HEK293 (cell line): ENCODE measurements at regions of chr6 and their contacts with region 1.

Region 1: DNA sequence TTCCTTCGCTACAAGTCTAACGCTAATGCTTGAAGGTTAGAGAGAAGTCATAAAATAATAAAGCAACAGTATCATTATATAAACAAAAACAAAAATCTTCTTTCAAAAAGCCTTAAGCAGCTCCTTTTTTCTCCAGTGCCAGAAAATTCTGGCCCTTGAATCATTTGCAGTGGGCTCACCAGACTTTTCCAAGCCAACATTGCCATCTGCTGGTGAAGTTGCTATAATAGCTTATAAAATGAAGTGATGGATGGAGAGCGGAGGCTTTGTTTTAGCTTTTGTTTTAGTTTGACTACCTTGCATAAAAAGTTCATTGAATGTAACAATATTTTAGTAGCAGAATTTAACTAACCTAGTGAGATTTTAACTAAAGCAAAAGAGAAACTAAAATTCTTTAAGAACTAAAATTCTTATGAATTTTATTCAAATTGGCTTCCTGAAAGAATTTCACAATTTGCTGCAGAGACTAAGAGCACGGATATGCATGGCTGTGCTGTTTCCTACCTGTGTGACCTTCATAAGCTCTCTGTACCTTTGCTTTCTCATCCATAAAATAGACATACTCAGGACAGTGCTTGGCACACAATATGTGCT is 44.8 kb upstream of the SLC2A12 start:
- H3K4me3 ChIP-seq: no peak overlapping the region
- H3K27ac ChIP-seq: no peak overlapping the region
- H3K4me1 ChIP-seq: no peaks in the 10 kb centered on the region
- CTCF ChIP-seq: peak; percentile 32; the same call in 1 of the 2 replicates

Region 2: DNA sequence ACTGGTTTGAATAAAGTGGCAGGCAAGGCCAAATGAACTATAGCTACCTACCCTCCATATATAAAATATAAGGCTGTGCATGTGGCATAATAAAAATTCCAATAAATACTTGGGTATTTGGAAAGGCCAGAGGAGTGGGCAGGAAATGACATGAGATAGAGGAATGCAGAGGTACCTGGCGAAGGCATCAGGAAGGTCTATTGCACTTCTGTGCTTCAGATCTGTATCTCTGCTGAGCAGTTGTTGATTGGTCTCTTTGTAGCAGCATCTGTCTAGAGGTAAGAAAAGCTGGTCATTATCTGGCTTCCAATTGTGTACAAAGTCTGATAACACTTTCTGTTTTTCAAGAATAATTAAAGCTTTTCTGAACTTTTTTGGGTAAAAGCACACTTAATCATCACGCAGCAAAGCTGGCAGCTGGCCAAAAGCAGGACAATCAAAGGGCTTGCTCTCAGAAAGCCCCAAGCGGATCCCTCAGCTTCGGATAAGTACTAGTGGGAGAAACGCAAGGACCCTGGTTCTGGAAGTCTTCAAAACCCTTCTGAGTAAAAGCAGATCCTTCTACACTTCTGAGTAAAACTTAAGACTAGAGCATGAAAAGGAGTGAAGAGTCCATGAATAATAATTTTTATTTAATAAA is 328.4 kb before region 1 on chr6:
- CTCF ChIA-PET with region 1: no interaction called
- POLR2A ChIA-PET with region 1: no interaction called
- H3K4me3 ChIP-seq: no peak overlapping the region
- H3K27ac ChIP-seq: no peak overlapping the region
- H3K4me1 ChIP-seq: peaks cover 9% of the 10 kb centered on the region
- CTCF ChIP-seq: no peak

Region 3: GRCh38 chr6:133916650-133917151 is 180.5 kb before region 1 on chr6:
- CTCF ChIA-PET with region 1: interaction called, 693 read pairs
- POLR2A ChIA-PET with region 1: no interaction called
- H3K4me3 ChIP-seq: no peak overlapping the region
- H3K27ac ChIP-seq: no peak overlapping the region
- H3K4me1 ChIP-seq: peaks cover 4% of the 10 kb centered on the region
- CTCF ChIP-seq: peak; percentile 88

Region 4: GRCh38 chr6:133966654-133967329 is 130.4 kb before region 1 on chr6:
- CTCF ChIA-PET with region 1: interaction called, 22 read pairs
- POLR2A ChIA-PET with region 1: no interaction called
- H3K4me3 ChIP-seq: no peak overlapping the region
- H3K27ac ChIP-seq: no peak overlapping the region
- H3K4me1 ChIP-seq: peaks cover 12% of the 10 kb centered on the region
- CTCF ChIP-seq: no peak

Region 5: DNA sequence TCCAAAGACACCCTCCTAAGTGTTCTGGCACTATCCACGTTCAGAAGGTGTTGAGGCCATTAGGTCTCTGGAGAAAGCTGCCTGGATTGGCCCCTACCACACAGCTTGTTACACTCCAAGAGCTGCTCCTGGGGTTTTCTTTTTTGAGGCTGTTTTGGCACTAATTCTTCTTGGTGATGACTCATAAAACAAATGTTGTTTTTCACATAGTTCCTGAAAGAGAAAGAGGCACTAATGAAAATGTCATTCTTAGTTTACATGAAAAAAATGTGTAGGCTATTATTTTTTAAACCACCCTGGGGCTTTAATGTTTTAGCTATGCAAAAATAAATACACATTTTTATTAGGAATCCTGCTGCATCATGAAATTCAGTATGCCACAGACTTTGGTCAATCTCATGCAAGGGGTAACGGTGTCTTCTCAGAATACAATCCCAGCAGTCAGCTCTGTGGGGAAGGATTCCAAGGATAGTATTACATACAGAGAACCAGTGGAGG is 106.1 kb before region 1 on chr6:
- CTCF ChIA-PET with region 1: interaction called, 17 read pairs
- POLR2A ChIA-PET with region 1: no interaction called
- H3K4me3 ChIP-seq: no peak overlapping the region
- H3K27ac ChIP-seq: no peak overlapping the region
- H3K4me1 ChIP-seq: peaks cover 12% of the 10 kb centered on the region
- CTCF ChIP-seq: no peak

Region 6: GRCh38 chr6:134063966-134064445 is 33.2 kb before region 1 on chr6:
- CTCF ChIA-PET with region 1: interaction called, 127 read pairs
- POLR2A ChIA-PET with region 1: interaction called, 8 read pairs
- H3K4me3 ChIP-seq: no peak overlapping the region
- H3K27ac ChIP-seq: no peak overlapping the region
- H3K4me1 ChIP-seq: no peaks in the 10 kb centered on the region
- CTCF ChIP-seq: peak; percentile 91

Region 7: GRCh38 chr6:134111062-134111677 is 14.0 kb after region 1 on chr6:
- CTCF ChIA-PET with region 1: interaction called, 57 read pairs
- POLR2A ChIA-PET with region 1: no interaction called
- H3K4me3 ChIP-seq: no peak overlapping the region
- H3K27ac ChIP-seq: no peak overlapping the region
- H3K4me1 ChIP-seq: peaks cover 7% of the 10 kb centered on the region
- CTCF ChIP-seq: peak; percentile 77

Region 8: GRCh38 chr6:134491477-134491876 is 394.3 kb after region 1 on chr6:
- CTCF ChIA-PET with region 1: no interaction called
- POLR2A ChIA-PET with region 1: no interaction called
- H3K4me3 ChIP-seq: no peak overlapping the region
- H3K27ac ChIP-seq: no peak overlapping the region
- H3K4me1 ChIP-seq: no peaks in the 10 kb centered on the region
- CTCF ChIP-seq: no peak